ENCODE measurements at regions of chr19 and their contacts with region 1.

Region 1: GRCh38 chr19:10403137-10404021 is at the start of gene CDC37:
- DNase-seq: peak; percentile 96
- H3K4me3 ChIP-seq: peak within 1 kb of the TSS; percentile 64 to 86
- H3K27ac ChIP-seq: peak within 1 kb of the TSS; percentile 72 to 73
- H3K4me1 ChIP-seq: peaks cover 19% of the 10 kb centered on the region
- H3K27me3 ChIP-seq: no peaks in the 10 kb centered on the region
- CTCF ChIP-seq: peak in 1 of 4 experiments; percentile 17
- POLR2A ChIP-seq: peak; percentile 76
- total RNA-seq, gene CDC37: 135 to 159 TPM

Region 2: GRCh38 chr19:10424011-10424637 is 20.7 kb after region 1 on chr19:
- intact Hi-C with region 1: loop called (anchors 2 kb)
- DNase-seq: peak; percentile 62
- H3K4me3 ChIP-seq: peak overlapping the region; percentile 13 to 20
- H3K27ac ChIP-seq: peak overlapping the region in 1 of 2 donors; percentile 33
- H3K4me1 ChIP-seq: peaks cover 11% of the 10 kb centered on the region
- H3K27me3 ChIP-seq: peaks cover 21% of the 10 kb centered on the region
- CTCF ChIP-seq: peak; percentile 67 to 86 (median 72)
- POLR2A ChIP-seq: no peak

Measured in prostate gland (tissue), 2 donors.